ENCODE measurements at regions of chr17 and their contacts with region 1.

Region 1: GRCh38 chr17:32854207-32854606 is 22.7 kb downstream of the MYO1D start:
- DNase-seq: no peak
- H3K4me3 ChIP-seq: no peak overlapping the region
- H3K27ac ChIP-seq: no peak overlapping the region
- H3K4me1 ChIP-seq: no peaks in the 10 kb centered on the region
- H3K27me3 ChIP-seq: no peaks in the 10 kb centered on the region
- CTCF ChIP-seq: no peak
- POLR2A ChIP-seq: no peak

Region 2: GRCh38 chr17:32361270-32361669 is 492.9 kb before region 1 on chr17:
- intact Hi-C with region 1: loop called (anchors 10 kb)
- DNase-seq: no peak
- H3K4me3 ChIP-seq: no peak overlapping the region
- H3K27ac ChIP-seq: no peak overlapping the region
- H3K4me1 ChIP-seq: no peaks in the 10 kb centered on the region
- H3K27me3 ChIP-seq: no peaks in the 10 kb centered on the region
- CTCF ChIP-seq: no peak
- POLR2A ChIP-seq: no peak

Region 3: GRCh38 chr17:32819035-32819434 is 35.2 kb before region 1 on chr17:
- intact Hi-C with region 1: no loop called
- DNase-seq: no peak
- H3K4me3 ChIP-seq: no peak overlapping the region
- H3K27ac ChIP-seq: peak overlapping the region; percentile 4 to 64
- H3K4me1 ChIP-seq: no peaks in the 10 kb centered on the region
- H3K27me3 ChIP-seq: no peaks in the 10 kb centered on the region
- CTCF ChIP-seq: no peak
- POLR2A ChIP-seq: no peak

Region 4: DNA sequence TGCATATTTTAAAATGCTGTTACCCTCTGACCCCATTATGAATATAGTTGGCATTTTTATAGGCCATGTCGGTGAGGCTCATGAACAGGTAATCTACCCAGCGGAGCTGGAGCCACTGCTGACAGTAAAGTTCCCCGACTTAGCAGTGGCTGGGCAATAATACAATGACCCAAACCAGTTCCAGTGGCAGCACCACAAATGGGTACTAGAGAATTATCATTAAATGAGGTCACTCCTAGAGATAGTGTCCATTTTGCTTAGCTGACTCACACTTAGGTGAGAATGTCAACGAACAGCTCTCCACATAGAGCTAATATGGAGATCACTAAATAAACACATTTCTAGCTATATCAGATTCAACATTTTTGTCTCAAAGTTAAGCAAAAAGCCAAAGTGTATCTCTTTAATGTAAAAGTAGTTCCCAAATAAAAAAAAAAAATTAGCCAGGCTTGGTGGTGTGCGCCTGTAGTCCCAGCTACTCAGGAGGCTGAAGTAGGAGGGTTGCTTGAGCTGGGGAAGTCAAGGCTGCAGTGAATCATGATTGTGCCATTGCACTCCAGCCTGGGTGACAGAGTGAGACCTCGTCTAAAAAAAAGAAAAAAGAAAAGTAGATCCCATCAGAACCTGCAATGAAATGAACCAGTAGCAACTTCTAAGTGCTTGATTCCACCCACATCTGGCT is 15.3 kb after region 1 on chr17:
- intact Hi-C with region 1: loop called (anchors 1 kb)
- DNase-seq: no peak
- H3K4me3 ChIP-seq: no peak overlapping the region
- H3K27ac ChIP-seq: peak overlapping the region in 1 of 2 donors; percentile 49
- H3K4me1 ChIP-seq: peaks cover 0 to 5% of the 10 kb centered on the region in 2 donors
- H3K27me3 ChIP-seq: no peaks in the 10 kb centered on the region
- CTCF ChIP-seq: no peak
- POLR2A ChIP-seq: no peak

Region 5: DNA sequence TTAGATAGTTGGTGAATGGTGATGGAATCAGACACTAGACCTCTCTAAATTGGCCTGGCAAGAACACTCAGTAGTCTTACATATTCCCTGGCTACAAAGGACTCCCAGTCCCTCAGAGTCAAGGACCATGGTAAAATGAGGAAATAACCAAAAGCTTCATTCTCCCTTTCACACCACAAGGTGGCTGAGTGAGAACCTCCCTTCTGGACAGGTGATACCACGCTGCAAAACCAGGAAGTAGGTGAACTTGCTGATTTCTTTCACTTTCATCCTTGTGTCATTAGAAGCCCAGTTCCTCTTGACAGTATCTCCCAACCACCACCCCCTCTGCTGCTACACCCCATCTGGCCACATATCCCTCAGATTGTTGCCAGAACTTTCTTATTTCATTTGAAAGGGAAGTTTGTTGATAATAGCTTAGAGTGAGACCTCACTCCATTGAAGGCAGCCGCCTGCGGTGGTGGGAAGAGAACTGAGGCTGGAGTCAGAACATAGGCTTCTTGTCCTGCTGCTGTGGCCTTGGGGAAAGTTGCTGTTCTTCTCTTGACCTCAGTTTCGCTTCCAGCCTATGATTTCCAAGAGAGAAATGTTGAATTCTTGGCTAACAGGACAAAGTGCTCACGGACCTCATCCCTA is 1110.3 kb after region 1 on chr17:
- intact Hi-C with region 1: no loop called
- DNase-seq: no peak
- H3K4me3 ChIP-seq: no peak overlapping the region
- H3K27ac ChIP-seq: no peak overlapping the region
- H3K4me1 ChIP-seq: no peaks in the 10 kb centered on the region
- H3K27me3 ChIP-seq: peaks cover 0 to 11% of the 10 kb centered on the region in 2 donors
- CTCF ChIP-seq: no peak
- POLR2A ChIP-seq: no peak